ENCODE measurements at regions of chr1 and their contacts with region 1.

Region 1: GRCh38 chr1:34859446-34860200 is at the start of gene SMIM12:
- DNase-seq: peak; percentile 97
- ATAC-seq: peak; percentile 100
- total RNA-seq, gene SMIM12: 40.0 to 68.2 TPM

Region 2: DNA sequence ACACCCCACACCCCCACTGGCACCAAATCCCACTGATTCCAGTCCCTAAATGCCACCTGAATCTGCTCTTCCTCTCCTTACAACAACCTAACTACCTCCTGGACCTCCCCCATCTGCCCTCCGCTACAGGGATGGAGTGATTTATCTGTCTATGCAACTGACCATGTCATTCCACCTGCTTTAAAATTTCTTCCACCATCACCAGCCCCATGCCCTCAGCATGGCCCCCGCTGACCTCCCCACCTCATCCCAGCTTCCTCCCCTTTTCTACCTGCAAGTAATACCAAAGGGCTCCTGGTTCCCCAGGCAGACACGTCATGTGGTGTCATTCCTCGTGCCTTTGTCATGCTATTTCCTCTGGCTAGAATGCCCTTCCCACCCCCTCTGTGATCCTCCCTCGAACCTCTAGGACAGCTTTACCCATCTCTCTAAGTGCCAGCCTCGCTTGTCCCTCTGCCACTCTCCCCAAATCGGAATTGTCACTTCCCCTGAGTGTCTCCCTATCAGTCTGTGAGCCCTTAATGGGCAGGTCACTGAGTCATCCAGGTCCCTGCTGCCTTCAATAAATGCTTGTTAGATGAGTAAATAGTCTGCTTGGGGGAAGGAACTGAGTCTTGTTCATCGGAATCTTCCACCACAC is 96.4 kb before region 1 on chr1:
- intact Hi-C with region 1: no loop called
- DNase-seq: no peak
- ATAC-seq: no peak

Region 3: DNA sequence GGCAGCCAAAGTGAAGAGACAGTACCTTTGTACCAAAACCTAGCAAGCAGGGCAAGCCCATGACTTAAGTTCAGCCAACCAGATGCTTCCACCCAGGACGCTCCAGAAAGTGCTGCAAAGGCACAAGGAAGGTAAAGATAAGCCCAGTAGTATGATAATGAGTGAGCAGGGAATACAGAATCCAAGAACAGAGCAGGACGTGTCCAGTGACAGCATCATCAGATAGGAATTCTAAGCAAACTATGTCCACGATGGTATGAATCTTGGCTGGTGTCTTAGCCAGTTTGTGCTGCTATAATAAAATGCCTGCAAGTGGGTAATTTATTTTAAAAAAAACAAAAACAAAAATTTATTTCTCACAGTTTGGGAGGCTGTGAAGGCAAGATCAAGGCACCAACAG is 53.2 kb before region 1 on chr1:
- intact Hi-C with region 1: no loop called
- DNase-seq: no peak
- ATAC-seq: peak; percentile 5 to 27

Region 4: GRCh38 chr1:34984793-34985608 is 125.4 kb after region 1 on chr1 and contains the start of gene TMEM35B:
- intact Hi-C with region 1: loop called in 1 of 2 experiments (anchors 10 kb)
- DNase-seq: peak; percentile 77
- ATAC-seq: peak; percentile 95
- total RNA-seq, gene TMEM35B: 16.9 to 19.2 TPM

Region 5: GRCh38 chr1:35030756-35031446 is 171.3 kb after region 1 on chr1:
- intact Hi-C with region 1: no loop called
- DNase-seq: peak; percentile 32
- ATAC-seq: peak; percentile 16 to 69

Region 6: GRCh38 chr1:35151220-35151619 is 291.6 kb after region 1 on chr1:
- intact Hi-C with region 1: no loop called
- DNase-seq: no peak
- ATAC-seq: no peak

Measured in left cardiac atrium (tissue), 4 donors.